HAP-1 (cell line): ENCODE measurements at regions of chr2 and their contacts with region 1.

Region 1: GRCh38 chr2:232327105-232328041 is 51.2 kb upstream of the ALPP start:
- DNase-seq: peak; percentile 4 to 89
- H3K4me3 ChIP-seq: no peak overlapping the region
- H3K4me1 ChIP-seq: no peaks in the 10 kb centered on the region
- H3K27me3 ChIP-seq: no peaks in the 10 kb centered on the region

Region 2: DNA sequence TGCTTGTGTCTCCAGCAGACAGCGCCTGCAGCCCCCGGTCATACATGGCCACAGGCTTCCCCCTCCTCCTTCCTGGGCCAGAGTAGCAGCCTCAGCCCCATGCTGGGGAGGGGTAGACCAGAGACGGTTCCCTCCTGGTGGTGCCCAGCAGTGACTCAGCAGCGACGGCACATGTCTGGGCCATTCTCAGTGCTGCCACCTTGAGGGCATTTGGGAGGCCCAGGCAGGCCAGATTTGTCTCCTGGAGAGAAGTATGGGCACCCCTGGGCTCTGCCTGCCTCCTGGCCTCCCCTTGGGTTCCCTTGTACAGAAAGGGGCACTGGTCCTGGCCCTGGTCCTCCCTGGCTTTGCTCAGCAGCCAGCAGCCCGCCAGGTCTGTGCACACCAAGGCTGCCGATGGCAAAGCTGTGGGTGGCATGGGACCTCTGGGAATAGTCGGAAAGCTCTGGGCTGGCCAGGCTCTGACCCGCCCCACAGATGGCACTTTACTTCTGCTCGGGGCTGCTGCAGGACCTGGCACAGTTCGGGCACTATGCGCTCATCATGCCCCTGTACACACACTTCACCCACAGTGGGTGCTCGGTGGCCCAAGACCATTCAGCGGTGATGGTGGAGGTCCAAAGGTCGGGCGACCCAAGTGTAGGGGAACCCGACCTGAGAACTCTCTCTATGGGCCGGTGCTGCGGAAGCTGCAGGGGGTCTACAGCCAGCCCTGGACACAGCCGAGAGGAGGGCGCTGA is 117.2 kb after region 1 on chr2:
- in situ Hi-C with region 1: loop called (anchors 10 kb)
- DNase-seq: peak; percentile 24 to 77
- H3K4me3 ChIP-seq: no peak overlapping the region
- H3K4me1 ChIP-seq: no peaks in the 10 kb centered on the region
- H3K27me3 ChIP-seq: no peaks in the 10 kb centered on the region